ENCODE measurements at regions of chr5 and their contacts with region 1.

Region 1: GRCh38 chr5:97127727-97128126 is 14.7 kb downstream of the LIX1 start:
- DNase-seq: no peak
- ATAC-seq: no peak
- H3K4me3 ChIP-seq: no peak overlapping the region
- H3K4me3 Mint-ChIP-seq: no peak overlapping the region
- H3K27ac ChIP-seq: no peak overlapping the region
- H3K27ac Mint-ChIP-seq: no peak overlapping the region
- H3K4me1 ChIP-seq: no peaks in the 10 kb centered on the region
- H3K4me1 Mint-ChIP-seq: no peaks in the 10 kb centered on the region
- H3K27me3 ChIP-seq: no peaks in the 10 kb centered on the region
- H3K27me3 Mint-ChIP-seq: peaks cover 4% of the 10 kb centered on the region
- CTCF ChIP-seq: no peak

Region 2: GRCh38 chr5:96384353-96384752 is 743.4 kb before region 1 on chr5:
- CTCF ChIA-PET with region 1: no interaction called
- POLR2A ChIA-PET with region 1: no interaction called
- intact Hi-C with region 1: no loop called
- DNase-seq: no peak
- ATAC-seq: no peak
- H3K4me3 ChIP-seq: no peak overlapping the region
- H3K4me3 Mint-ChIP-seq: no peak overlapping the region
- H3K27ac ChIP-seq: no peak overlapping the region
- H3K27ac Mint-ChIP-seq: no peak overlapping the region
- H3K4me1 ChIP-seq: no peaks in the 10 kb centered on the region
- H3K4me1 Mint-ChIP-seq: peaks cover 3% of the 10 kb centered on the region
- H3K27me3 ChIP-seq: peaks cover 0 to 7% of the 10 kb centered on the region in 2 experiments
- H3K27me3 Mint-ChIP-seq: peaks cover 19% of the 10 kb centered on the region
- CTCF ChIP-seq: no peak

Region 3: GRCh38 chr5:97044052-97044451 is 83.7 kb before region 1 on chr5:
- CTCF ChIA-PET with region 1: no interaction called
- POLR2A ChIA-PET with region 1: no interaction called
- intact Hi-C with region 1: loop called in 1 of 2 experiments (anchors 5 kb)
- DNase-seq: no peak
- ATAC-seq: no peak
- H3K4me3 ChIP-seq: no peak overlapping the region
- H3K4me3 Mint-ChIP-seq: no peak overlapping the region
- H3K27ac ChIP-seq: no peak overlapping the region
- H3K27ac Mint-ChIP-seq: no peak overlapping the region
- H3K4me1 ChIP-seq: no peaks in the 10 kb centered on the region
- H3K4me1 Mint-ChIP-seq: no peaks in the 10 kb centered on the region
- H3K27me3 ChIP-seq: no peaks in the 10 kb centered on the region
- H3K27me3 Mint-ChIP-seq: no peaks in the 10 kb centered on the region
- CTCF ChIP-seq: no peak